Breast epithelium (tissue), 4 donors: ENCODE measurements at regions of chr7 and their contacts with region 1.

Region 1: DNA sequence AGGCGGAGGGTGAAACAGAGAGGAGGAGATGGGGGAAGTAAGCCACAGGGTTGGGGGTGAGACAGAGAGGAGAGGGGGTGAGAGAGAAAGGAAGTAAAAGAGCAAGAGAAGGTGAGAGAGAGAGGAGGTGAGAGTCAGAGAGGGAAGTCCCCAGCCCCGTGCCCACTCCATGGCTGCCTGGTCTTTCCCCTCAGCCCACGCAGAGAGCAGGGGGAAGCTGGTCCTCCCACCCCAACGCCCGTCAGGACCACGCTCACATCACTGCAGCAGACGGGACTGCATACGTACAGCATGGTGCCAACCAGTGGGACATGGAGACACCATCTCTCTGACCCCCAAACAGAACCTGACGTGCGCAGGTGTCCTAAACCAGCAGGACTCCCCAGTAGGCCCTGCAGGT is 12.1 kb upstream of the PDGFA start:
- DNase-seq: no peak
- H3K4me3 ChIP-seq: no peak overlapping the region
- H3K27ac ChIP-seq: no peak overlapping the region
- H3K4me1 ChIP-seq: no peaks in the 10 kb centered on the region
- H3K27me3 ChIP-seq: peaks cover 0 to 8% of the 10 kb centered on the region in 2 donors
- CTCF ChIP-seq: no peak
- POLR2A ChIP-seq: no peak

Region 2: GRCh38 chr7:593324-594115 is 61.7 kb after region 1 on chr7:
- intact Hi-C with region 1: no loop called
- DNase-seq: no peak
- H3K4me3 ChIP-seq: no peak overlapping the region
- H3K27ac ChIP-seq: no peak overlapping the region
- H3K4me1 ChIP-seq: peaks cover 0 to 6% of the 10 kb centered on the region in 2 donors
- H3K27me3 ChIP-seq: no peaks in the 10 kb centered on the region
- CTCF ChIP-seq: no peak
- POLR2A ChIP-seq: no peak

Region 3: DNA sequence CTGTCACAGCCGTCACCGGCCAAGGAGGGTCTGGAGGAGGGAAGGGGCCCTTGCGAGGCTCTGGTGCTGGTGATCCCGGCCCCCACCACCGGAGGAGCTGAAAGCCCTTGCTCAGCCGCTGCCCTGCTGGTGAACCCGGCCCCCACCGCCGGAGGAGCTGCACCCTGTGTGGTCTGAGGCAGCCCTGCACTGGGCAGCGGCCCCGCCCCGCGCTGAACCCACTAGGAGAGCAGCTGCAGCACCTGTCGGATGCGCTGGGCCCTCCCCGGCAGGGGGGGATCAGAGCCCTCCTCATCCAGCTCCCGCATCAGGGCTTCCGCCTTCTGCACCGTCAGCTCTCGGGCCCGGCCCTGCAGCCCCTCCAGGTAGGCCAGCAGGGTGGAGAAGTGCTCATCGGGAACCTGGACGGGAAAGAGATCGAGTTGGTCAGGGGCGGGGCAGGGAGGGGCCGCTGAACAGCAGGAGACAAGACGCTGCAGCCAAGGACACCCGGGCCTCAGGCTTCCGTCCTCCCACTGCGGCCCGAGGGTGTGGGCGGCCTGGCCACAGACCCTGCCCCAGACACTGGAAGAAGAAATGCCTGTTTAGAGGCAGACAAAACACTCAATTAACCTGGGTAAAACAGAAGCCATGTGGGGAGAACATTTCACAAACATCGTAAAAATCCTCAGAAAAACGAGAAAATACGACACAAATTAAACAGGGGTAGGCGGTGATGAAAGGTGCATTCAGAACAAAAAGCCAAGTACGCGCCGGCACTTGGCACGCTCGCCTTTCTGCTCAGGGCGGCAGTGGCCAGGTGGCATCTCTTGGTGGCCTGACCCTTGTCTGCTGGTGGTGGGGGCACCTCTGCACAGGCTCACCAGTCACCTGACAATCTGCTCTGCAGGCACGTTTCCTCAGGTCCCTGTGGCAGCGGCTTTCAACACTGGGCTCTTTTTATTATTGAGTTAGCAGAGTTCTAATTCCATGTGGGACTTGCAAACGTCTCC is 465.9 kb after region 1 on chr7:
- intact Hi-C with region 1: no loop called
- DNase-seq: no peak
- H3K4me3 ChIP-seq: no peak overlapping the region
- H3K27ac ChIP-seq: no peak overlapping the region
- H3K4me1 ChIP-seq: no peaks in the 10 kb centered on the region
- H3K27me3 ChIP-seq: no peaks in the 10 kb centered on the region
- CTCF ChIP-seq: no peak
- POLR2A ChIP-seq: no peak

Region 4: DNA sequence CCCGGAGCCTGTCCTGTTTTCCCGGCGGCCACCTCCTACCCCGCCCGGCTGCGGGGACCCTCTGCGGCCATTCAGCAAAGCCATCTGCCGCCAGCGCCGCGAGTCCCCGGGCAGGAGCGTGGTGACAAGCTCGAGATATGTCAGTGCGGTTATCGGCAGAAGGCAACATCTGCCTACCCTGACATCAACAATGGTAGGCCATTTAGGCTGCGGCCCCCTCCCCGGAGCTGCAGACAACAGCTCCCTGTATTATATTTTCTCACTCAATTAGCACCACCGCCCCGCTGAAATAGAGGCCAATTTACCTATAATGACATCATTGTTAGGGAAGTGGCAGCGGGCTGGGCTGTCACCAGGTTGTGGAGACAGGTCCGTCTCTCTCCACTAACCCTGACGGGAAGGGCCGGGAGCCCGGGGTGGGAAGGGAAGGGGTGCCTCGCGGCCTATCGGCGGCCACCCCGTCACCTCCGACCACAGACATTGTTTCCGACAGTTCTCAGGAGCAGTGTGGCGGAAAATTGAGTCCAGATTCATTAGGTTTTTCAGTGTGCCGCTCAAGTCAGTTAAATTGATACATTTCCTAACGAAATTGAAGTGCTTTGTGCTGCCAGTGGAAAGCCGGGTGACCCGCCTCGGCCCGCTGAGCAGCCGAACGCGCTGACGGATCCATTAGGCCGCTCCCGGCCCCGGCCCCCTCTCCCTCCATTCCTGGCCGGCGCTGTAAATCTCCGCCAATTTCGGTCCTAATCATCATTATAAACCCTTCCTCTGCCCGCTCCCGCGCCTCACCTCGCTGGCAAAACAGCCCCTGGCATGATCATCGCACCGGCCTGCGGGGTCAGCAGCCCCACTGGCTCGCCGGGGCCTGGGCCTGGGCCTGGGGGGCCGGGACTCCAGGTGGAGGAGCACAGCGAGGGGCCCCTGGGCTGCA is 743.9 kb after region 1 on chr7:
- intact Hi-C with region 1: no loop called
- DNase-seq: no peak
- H3K4me3 ChIP-seq: no peak overlapping the region
- H3K27ac ChIP-seq: no peak overlapping the region
- H3K4me1 ChIP-seq: no peaks in the 10 kb centered on the region
- H3K27me3 ChIP-seq: peaks cover 0 to 51% of the 10 kb centered on the region in 2 donors
- CTCF ChIP-seq: no peak
- POLR2A ChIP-seq: no peak

Region 5: DNA sequence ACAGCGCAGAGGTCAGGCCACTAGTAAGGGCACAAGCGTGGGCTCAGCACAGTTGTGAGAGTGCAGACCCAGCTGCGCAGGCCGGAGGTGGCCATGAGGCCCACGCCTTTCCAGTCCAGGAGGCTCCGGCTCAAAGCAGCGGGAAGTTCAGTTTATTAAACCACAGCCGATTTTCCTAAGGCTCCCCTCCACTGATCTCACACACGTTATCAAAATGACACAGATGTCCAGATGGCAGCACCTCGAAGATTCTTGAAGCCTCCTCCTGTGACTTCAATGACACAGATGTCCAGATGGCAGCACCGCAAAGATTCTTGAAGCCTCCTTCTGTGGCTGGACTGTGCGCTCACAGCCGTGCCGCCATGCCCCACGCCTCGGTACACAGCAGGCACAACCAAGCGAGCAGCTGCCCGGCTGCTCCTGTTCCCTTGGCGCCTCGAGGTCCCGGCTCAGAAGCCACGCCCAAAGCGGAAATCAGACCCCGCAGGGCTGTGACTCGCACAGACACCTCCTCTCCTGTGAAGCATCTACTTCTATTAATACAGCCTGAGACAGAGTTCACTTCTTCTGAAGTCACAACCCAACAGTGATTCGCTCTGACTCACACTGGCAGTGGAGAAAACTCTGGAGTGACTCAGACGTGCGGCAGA is 1578.3 kb after region 1 on chr7:
- intact Hi-C with region 1: loop called (anchors 5 kb)
- DNase-seq: no peak
- H3K4me3 ChIP-seq: no peak overlapping the region
- H3K27ac ChIP-seq: peak overlapping the region in 1 of 2 donors; percentile 1
- H3K4me1 ChIP-seq: no peaks in the 10 kb centered on the region
- H3K27me3 ChIP-seq: no peaks in the 10 kb centered on the region
- CTCF ChIP-seq: no peak
- POLR2A ChIP-seq: no peak